ENCODE measurements at regions of chr5 and their contacts with region 1.

Region 1: GRCh38 chr5:159156426-159157238 is 52.7 kb downstream of the RNF145 start:
- DNase-seq: no peak
- ATAC-seq: peak; percentile 86

Region 2: GRCh38 chr5:159252195-159252594 is 95.6 kb after region 1 on chr5:
- intact Hi-C with region 1: no loop called
- DNase-seq: no peak
- ATAC-seq: no peak

Region 3: DNA sequence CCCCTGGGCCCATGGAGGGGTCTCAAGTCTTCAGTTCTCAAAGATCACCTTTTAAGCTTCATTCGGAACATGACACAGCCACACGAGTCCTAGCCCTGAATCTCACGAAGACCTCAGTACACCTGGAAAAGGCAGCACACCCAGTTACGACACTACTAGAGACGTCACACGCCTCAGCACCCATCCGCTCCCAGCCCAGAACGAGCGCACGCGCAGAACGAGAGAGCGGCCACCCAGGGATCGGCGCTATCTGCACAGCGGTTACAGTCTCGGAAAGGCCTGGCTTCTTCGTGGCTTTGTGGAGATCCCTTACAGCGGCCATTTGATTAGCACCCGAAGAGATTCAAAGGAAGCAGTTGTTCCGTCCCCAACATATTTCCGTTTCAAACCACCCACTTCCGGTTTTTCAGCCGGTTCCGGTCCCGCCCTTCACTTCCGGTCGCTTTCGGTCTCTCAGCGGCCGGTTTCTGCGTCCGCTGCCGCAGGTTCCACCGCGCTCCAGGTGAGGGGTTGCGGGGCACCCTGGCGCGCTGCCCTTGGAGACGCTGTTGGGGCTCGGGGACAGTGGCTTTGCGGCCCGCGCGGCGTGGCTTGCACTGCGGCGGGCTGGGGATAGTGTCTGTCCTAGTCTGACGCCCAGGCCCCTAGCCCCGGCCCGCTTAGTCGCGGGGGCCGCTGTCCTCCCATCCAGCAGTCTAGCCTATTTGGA is 106.4 kb after region 1 on chr5 and contains the start of gene UBLCP1:
- intact Hi-C with region 1: loop called in 1 of 2 experiments (anchors 10 kb)
- DNase-seq: peak; percentile 79 to 86
- ATAC-seq: peak; percentile 97
- total RNA-seq, gene UBLCP1: 13.3 to 16.7 TPM

Region 4: DNA sequence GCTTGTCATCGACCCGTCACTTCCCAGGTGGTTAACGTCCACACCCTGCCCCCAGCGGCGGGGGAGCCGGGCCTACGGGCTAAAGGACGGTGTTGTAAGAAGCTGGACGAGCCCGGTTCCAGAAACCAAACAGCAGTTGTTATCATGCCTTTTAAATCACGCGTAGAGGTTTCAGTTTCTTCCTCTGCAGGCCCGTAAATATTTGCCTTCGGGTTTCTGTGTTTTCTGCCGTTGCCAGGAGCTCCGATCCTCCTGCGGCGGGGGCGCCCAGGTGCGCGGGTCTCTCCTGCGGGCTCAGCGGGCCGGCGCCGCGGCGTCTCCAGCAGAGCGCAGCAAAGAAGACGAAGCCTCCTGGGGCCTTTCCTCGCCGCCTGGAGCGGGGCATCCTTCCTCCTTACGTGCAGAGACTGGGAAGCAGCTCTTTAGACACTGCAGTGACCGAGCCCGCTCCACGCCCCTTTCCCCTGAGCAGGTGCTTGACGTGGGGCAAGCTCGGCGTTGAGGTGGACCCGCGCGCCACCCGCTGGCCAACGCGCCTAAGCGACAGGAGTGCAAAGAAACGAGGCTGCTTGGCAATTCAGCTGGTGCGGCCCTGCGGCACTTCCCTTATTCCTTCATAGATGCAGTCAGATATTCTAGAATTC is 830.5 kb after region 1 on chr5:
- intact Hi-C with region 1: loop called in 1 of 2 experiments (anchors 10 kb)
- DNase-seq: peak; percentile 80 to 89
- ATAC-seq: peak; percentile 100

Measured in left colon (tissue), 2 donors.